ENCODE measurements at regions of chr11 and their contacts with region 1.

Region 1: DNA sequence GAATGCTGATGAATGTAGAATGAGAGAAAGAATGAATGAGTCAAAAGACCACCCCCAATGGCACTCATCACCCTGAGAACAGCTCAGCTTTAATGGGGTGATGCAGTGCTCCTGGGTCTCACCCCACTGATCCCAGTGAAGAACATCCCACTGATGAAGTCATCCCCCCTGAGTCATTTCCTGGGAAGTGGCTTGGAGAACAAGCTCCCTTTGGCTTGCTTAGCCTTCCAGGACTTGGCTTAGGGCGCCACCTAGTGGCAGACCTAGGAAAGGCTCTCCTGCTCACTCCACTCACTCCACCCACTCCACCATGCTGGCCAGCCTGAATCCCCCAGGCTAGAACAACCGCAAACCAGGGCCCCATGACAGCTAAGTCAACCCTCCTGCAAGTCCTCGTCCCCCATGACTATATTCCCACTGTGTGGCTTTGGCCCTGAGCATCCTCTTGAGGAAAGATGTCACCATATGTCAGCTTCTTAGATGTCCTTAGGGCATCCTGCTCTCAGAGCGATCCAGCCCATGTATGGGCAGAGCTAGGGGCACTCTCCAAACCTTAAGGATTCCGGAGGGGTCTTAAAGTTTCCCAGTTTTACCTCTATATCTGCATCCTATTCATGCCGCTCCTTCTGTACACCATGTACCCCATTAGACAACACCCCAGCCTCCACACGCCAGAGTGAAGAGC is 17.8 kb upstream of the TMPRSS13 start:
- DNase-seq: peak; percentile 50
- H3K4me3 ChIP-seq: no peak overlapping the region
- H3K27me3 ChIP-seq: no peaks in the 10 kb centered on the region
- CTCF ChIP-seq: peak; percentile 94

Region 2: DNA sequence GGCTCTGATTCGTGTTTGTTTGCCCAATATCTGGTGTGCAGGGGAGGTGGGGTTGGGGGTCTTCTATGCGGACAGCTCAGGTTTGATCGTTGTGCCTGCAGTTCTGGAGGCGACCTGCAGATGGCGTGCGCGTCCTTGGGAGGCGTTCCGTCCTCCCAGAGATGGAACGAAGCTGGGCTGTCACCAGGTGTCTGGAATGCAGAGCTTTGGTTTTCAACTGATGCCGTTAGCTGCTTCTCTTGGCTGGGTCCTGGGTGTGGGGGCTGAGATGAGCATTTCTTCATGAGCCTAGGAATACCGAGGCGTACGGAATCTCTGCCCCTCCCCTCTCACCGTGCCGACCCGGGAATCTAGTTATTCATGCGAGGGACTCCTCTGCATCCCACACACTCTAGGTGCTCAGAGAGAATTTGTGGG is 520.7 kb before region 1 on chr11:
- CTCF ChIA-PET with region 1: interaction called, 12 read pairs
- POLR2A ChIA-PET with region 1: no interaction called
- DNase-seq: no peak
- H3K4me3 ChIP-seq: no peak overlapping the region
- H3K27me3 ChIP-seq: peaks cover 5% of the 10 kb centered on the region
- CTCF ChIP-seq: peak; percentile 99

Region 3: GRCh38 chr11:117817368-117818040 is 129.5 kb before region 1 on chr11:
- CTCF ChIA-PET with region 1: interaction called, 49 read pairs
- POLR2A ChIA-PET with region 1: no interaction called
- DNase-seq: peak; percentile 4
- H3K4me3 ChIP-seq: no peak overlapping the region
- H3K27me3 ChIP-seq: no peaks in the 10 kb centered on the region
- CTCF ChIP-seq: peak; percentile 99

Region 4: DNA sequence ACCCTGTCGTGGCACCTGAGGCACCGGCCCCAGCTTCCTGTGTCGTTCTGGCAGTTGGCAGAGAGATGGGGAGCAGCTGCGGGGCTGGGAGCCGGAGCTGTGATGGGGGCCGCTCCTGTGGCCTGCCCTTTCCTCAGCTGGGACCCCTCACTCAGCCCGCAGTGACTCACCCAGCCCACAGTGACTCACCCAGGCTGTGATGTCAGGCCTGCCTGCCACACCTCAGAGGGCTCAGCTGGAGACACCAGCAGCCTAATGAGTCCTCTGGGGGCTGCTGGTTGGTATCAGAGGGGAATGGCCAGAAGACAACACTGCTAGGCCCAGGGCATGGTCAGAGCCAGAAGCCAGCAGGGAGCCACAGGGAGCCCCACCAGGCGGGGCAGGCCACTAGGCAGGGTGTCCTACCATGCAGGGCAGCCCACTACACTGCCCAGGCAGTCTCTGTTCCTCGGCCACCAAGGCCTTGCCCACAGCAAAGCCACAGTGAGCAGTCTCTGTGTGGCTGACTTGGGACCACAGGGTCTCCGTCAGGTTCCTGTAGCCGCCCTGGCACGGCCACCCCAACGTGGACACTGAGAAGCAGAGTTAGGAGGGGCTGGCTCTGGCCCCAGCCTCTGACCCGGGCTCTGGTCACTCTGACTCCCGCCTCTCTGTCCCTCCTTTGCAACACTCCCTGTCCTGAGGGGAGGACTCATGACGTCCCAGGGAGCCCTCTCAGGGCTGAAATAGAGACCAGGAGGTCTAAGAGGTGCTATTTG is 118.2 kb before region 1 on chr11:
- CTCF ChIA-PET with region 1: interaction called, 19 read pairs
- POLR2A ChIA-PET with region 1: no interaction called
- DNase-seq: no peak
- H3K4me3 ChIP-seq: no peak overlapping the region
- H3K27me3 ChIP-seq: peaks cover 2% of the 10 kb centered on the region
- CTCF ChIP-seq: no peak

Region 5: GRCh38 chr11:117843666-117844484 is 103.1 kb before region 1 on chr11:
- CTCF ChIA-PET with region 1: interaction called, 176 read pairs
- POLR2A ChIA-PET with region 1: no interaction called
- DNase-seq: no peak
- H3K4me3 ChIP-seq: no peak overlapping the region
- H3K27me3 ChIP-seq: peaks cover 2% of the 10 kb centered on the region; the same call in 1 of the 2 replicates
- CTCF ChIP-seq: peak; percentile 95

Region 6: GRCh38 chr11:117849781-117850414 is 97.1 kb before region 1 on chr11:
- CTCF ChIA-PET with region 1: interaction called, 176 read pairs
- POLR2A ChIA-PET with region 1: no interaction called
- DNase-seq: no peak
- H3K4me3 ChIP-seq: no peak overlapping the region
- H3K27me3 ChIP-seq: peaks cover 2% of the 10 kb centered on the region
- CTCF ChIP-seq: no peak

Region 7: DNA sequence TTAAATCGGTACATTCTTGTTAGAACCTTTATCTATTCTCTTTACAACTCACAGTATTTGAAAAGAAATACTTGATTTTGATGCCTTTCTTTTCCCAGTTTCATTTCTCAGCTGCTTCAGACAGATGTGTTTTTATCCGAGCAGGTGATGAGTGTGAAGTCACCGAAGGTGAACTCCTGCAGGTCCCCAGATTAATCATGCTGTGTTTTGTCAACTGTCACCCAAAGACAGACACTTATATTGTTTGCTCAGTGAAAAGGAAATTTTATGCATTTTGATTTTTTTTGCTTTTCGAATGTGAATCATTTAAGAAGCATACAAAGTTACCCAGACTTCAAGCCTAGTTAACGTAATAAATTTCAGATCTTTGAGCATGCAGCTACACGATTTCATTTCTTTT is 10.0 kb before region 1 on chr11:
- CTCF ChIA-PET with region 1: interaction called, 21 read pairs
- POLR2A ChIA-PET with region 1: no interaction called
- DNase-seq: no peak
- H3K4me3 ChIP-seq: no peak overlapping the region
- H3K27me3 ChIP-seq: no peaks in the 10 kb centered on the region
- CTCF ChIP-seq: no peak

Region 8: DNA sequence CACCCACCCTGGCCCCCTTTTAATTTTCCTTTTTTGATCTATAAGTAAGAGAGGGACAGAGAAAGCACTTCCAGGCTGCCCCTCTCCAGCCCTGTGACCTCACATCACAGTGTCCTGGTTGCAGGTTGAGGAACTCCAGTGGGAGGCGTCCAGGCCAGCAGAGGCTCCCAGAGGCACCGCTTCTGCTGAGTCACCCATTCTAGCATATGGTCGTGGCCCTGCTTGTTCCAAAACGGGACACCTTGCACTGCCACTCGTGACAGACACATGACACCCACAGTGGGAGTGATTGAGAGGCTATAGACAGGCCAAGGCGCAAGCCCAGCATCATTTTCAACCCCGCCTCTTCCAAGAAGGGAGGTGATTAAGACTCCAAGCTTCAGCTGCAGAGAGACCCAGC is 113.9 kb after region 1 on chr11:
- CTCF ChIA-PET with region 1: no interaction called
- POLR2A ChIA-PET with region 1: no interaction called
- DNase-seq: no peak
- H3K4me3 ChIP-seq: no peak overlapping the region
- H3K27me3 ChIP-seq: peaks cover 3% of the 10 kb centered on the region
- CTCF ChIP-seq: no peak

Measured in BJ (cell line).